GM10248 (cell line): ENCODE measurements at regions of chr12 and their contacts with region 1.

Region 1: GRCh38 chr12:124767066-124767821 is 96.4 kb downstream of the SCARB1 start:
- DNase-seq: peak; percentile 90
- CTCF ChIP-seq: peak; percentile 98

Region 2: DNA sequence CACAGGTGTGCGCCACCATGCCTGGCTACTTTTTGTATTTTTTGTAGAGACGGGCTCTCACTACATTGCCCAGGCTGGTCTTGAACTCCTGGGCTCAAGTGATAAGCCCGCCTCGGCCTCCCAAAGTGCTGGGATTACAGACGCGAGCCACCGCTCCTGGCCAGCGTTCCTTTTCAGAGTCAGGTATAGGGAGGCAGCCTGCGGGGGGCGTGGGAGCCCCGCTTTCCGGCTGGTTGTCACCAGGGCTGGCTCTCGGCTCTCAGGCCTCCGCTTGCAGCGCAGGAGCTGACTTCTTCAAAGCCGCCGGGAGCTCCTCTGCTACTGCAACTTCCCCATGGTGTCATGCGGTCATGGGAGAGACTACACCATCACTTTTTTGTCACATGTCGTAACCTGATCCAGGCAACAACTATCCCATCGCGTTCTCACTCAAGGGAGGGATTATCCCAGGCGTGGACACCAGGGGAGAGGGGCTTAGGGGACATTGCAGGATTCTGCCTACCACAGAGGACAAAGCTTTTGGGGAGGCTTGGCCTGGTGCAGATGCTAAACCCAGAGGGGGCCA is 32.9 kb before region 1 on chr12:
- CTCF ChIA-PET with region 1: interaction called, 11 read pairs
- POLR2A ChIA-PET with region 1: no interaction called
- DNase-seq: no peak
- CTCF ChIP-seq: no peak

Region 3: GRCh38 chr12:124740691-124741137 is 26.5 kb before region 1 on chr12:
- CTCF ChIA-PET with region 1: interaction called, 11 read pairs
- POLR2A ChIA-PET with region 1: no interaction called
- DNase-seq: peak; percentile 52
- CTCF ChIP-seq: no peak

Region 4: GRCh38 chr12:124754949-124755800 is 12.1 kb before region 1 on chr12:
- CTCF ChIA-PET with region 1: interaction called, 60 read pairs
- POLR2A ChIA-PET with region 1: no interaction called
- DNase-seq: peak; percentile 55
- CTCF ChIP-seq: no peak